ENCODE measurements at regions of chr7 and their contacts with region 1.

Region 1: DNA sequence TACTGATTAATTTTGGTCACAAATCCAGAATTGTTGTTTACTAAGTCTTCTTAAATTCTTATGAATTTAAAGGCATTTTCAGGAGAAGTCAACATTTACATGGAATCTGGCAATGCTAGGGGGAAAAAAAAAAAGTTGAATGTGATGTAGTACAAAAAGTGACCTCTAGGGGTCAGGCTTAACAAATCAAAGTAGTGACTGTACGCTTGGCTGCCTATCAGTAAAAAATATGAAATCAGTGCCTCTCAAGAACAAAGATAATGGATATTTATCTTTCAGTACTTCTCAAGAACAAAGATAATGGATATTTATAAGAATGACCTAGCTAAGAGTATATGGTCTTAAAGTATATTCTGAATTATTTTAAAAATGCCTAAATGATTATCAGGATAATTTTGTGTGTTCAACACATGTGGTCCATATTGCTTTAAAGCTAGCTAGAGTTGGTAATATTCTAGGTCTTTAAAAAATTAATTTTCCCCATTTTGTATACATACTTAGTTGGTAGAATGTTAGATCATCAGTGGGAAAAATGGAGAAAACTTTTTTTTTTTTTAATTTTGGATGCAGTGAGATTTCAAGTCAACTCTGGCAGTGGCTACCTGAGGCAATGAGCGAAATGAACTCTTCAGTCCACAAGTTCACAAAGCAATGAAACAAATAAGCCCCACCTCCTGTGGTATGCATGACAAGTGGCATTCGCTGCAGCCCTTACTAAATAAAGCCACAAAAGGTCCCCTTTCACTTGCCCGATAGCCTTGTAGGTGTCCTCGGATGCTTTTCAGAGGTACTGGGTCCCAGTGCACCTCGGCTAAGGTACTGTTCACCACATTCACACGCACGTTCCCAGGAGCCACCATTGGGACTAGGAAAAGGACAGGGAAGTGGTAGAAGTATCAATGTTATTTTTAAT is 51.2 kb upstream of the LAMB4 start:
- DNase-seq: peak; percentile 67
- ATAC-seq: peak; percentile 66; the same call in 1 of the 2 replicates
- H3K4me3 ChIP-seq: no peak overlapping the region
- H3K27ac ChIP-seq: no peak overlapping the region
- H3K4me1 ChIP-seq: no peaks in the 10 kb centered on the region
- H3K27me3 ChIP-seq: peaks cover 2% of the 10 kb centered on the region; the same call in 1 of the 2 replicates
- CTCF ChIP-seq: peak; percentile 71; the same call in 1 of the 2 replicates

Region 2: GRCh38 chr7:107232568-107233090 is 948.7 kb before region 1 on chr7:
- CTCF ChIA-PET with region 1: no interaction called
- POLR2A ChIA-PET with region 1: no interaction called
- in situ Hi-C with region 1: no loop called
- intact Hi-C with region 1: no loop called
- DNase-seq: no peak
- ATAC-seq: no peak
- H3K4me3 ChIP-seq: no peak overlapping the region
- H3K27ac ChIP-seq: no peak overlapping the region
- H3K4me1 ChIP-seq: no peaks in the 10 kb centered on the region
- H3K27me3 ChIP-seq: no peaks in the 10 kb centered on the region
- CTCF ChIP-seq: no peak

Region 3: DNA sequence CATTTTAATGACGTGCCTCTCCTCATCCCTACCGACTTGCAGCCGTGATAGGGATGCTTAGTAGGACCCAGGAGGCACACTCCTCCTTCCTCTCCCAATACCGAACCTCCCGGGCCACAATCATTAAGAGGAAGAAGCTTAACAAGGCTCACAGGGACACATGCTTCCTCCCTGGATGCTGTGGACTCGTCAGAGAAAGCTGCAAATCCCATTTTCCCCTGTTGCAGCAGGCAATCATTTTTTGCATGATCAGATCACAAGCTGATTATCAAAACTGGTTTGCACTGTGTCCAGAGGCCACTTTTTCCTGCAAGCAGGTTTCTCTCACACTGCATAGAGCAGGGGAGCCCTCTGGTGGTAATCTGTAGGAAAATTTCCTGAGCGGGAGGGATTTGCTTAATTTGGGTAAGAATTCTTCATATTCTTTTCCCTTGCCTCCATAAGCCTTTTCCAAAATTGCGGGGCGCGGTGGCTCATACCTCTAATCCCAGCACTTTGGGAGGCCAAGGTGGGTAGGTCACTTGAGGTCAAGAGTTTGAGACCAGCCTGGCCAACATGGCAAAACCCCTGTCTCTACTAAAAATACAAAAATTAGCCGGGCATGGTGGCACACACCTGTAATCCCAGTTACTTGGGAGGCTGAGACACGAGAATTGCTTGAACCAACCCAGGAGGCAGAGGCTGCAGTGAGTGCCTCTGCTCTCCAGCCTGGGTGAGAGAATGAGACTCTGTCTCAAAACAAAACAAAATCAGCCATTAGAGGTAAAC is 35.1 kb before region 1 on chr7:
- CTCF ChIA-PET with region 1: no interaction called
- POLR2A ChIA-PET with region 1: no interaction called
- in situ Hi-C with region 1: no loop called
- intact Hi-C with region 1: no loop called
- DNase-seq: peak; percentile 71
- ATAC-seq: peak; percentile 88
- H3K4me3 ChIP-seq: peak overlapping the region in 1 of 2 experiments; percentile 43; a peak in 2 of 4 replicates
- H3K27ac ChIP-seq: no peak overlapping the region
- H3K4me1 ChIP-seq: peaks cover 4% of the 10 kb centered on the region; the same call in 1 of the 2 replicates
- H3K27me3 ChIP-seq: peaks cover 3% of the 10 kb centered on the region; the same call in 1 of the 2 replicates
- CTCF ChIP-seq: peak; percentile 96

Region 4: DNA sequence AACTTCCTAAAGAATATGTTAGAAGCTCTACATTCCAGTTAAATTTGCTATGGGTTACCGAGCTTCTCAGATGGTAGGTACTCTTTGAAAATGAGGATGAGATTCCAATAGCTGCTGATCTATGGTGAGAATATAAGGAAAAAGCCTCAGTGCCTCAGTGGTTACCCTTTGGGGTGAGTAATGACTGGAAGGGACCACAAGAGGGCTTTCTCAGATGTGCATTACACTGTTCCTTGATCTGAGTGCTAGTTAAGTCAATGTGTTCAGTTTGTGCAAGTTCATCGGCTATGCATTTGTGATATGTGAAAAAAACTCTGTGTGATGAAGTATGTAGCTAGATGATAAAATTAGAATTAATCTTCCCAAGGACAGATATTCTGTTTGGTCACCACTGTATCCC is 271.4 kb after region 1 on chr7:
- CTCF ChIA-PET with region 1: interaction called, 3 read pairs
- POLR2A ChIA-PET with region 1: no interaction called
- in situ Hi-C with region 1: no loop called
- intact Hi-C with region 1: loop called (anchors 5 kb)
- DNase-seq: peak; percentile 17
- ATAC-seq: peak; percentile 67
- H3K4me3 ChIP-seq: no peak overlapping the region
- H3K27ac ChIP-seq: no peak overlapping the region
- H3K4me1 ChIP-seq: no peaks in the 10 kb centered on the region
- H3K27me3 ChIP-seq: peaks cover 30% of the 10 kb centered on the region
- CTCF ChIP-seq: peak; percentile 62

Region 5: DNA sequence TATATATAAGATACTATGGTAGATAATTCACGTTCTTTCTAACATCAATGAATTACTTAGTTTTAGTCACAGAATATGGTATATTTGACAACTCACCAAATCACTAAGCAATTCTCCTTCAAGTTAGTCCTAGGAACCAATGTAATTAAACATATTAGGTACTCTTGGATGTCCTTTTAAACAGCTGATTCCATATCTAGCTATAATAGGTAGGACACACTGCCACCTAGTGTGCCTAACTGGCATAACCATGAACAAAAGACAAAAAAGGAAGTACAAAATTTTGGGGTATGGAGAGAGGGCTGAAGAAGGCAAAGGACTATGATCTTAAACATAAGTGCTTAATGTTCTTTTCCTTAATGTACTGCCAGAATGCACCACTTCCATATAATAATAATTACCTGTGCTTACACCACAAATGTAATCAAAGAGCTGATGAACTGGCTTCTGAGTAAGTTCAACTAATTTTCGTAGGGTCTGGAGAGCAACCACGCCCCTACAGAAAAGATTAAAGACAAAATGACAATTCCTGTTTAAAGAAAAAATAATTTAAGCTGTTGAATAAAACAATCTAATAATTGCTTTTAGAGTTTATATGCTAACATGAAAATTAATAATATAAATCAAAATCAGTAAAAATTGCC is 315.9 kb after region 1 on chr7:
- CTCF ChIA-PET with region 1: interaction called, 5 read pairs
- POLR2A ChIA-PET with region 1: no interaction called
- in situ Hi-C with region 1: no loop called
- intact Hi-C with region 1: loop called (anchors 5 kb)
- DNase-seq: peak; percentile 47
- ATAC-seq: peak; percentile 62
- H3K4me3 ChIP-seq: no peak overlapping the region
- H3K27ac ChIP-seq: no peak overlapping the region
- H3K4me1 ChIP-seq: no peaks in the 10 kb centered on the region
- H3K27me3 ChIP-seq: no peaks in the 10 kb centered on the region
- CTCF ChIP-seq: peak; percentile 81; the same call in 1 of the 2 replicates

Region 6: DNA sequence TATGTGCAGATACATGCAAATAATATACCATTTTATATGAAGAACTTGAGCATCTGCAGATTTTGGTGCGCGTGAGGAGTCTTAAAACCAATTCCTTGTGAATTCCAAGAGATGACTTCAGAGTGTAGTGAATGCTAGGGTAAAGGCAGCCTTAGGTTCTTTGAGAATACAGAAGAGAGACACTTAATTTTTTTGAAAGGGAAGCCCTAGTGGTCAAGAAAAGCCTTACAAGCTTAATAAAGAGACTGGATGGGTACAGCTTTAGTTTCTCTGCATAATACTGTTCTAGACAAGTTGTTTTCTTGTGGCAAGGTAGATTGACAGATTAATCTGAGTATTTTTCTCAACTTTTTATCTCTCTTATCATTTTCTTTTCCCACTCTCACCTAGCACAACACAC is 1024.9 kb after region 1 on chr7:
- CTCF ChIA-PET with region 1: no interaction called
- POLR2A ChIA-PET with region 1: no interaction called
- in situ Hi-C with region 1: no loop called
- intact Hi-C with region 1: no loop called
- DNase-seq: no peak
- ATAC-seq: no peak
- H3K4me3 ChIP-seq: no peak overlapping the region
- H3K27ac ChIP-seq: no peak overlapping the region
- H3K4me1 ChIP-seq: no peaks in the 10 kb centered on the region
- H3K27me3 ChIP-seq: no peaks in the 10 kb centered on the region
- CTCF ChIP-seq: no peak

Measured in Panc1 (cell line).